Aorta (tissue), 5 donors: ENCODE measurements at regions of chr3 and their contacts with region 1.

Region 1: DNA sequence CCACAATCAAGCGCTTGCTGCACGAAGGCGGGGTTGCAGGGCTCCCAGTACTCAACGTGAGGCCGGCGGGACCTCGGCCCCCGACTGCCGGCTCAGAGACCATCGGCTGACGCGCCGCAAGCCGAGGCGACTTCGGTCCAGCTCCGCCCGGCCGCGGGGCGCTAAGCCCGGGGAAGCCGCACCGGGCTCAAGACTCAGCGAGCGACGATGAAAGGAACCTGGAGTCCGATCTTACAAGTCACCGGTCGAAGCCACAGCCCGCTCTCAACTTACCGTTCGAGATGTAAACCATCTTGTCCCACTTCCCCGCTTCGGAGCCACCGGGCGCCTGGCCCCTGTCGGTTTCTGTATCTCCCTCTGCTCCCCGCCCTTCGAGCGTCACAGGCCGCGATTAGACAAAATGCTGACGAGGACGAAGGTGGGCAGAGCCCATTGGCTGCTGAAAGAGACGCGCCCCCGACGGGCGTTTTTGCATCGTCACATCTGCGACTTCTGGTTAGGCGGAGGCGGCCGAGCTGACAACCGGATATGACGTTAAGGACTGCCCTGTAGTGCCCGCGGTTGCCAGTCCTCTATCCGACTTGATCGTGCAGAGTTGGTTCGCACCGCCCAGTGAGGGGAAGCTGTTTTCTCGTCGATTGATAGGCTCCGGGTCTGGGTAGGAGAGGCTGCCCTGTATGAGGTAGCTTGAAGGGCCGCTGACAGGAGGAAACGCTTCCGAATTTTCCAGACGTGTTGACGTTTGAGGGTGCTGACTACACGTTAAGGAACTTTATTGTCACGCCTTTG is at the start of gene SELENOK:
- DNase-seq: peak; percentile 99
- ATAC-seq: peak; percentile 100
- H3K4me3 ChIP-seq: peak within 1 kb of the TSS; percentile 37 to 52
- H3K27ac ChIP-seq: peak within 1 kb of the TSS; percentile 79 to 80
- H3K4me1 ChIP-seq: peaks cover 0 to 9% of the 10 kb centered on the region in 2 donors
- H3K27me3 ChIP-seq: no peaks in the 10 kb centered on the region
- total RNA-seq, gene SELENOK: 44.0 to 62.3 TPM

Region 2: GRCh38 chr3:53347261-53348064 is 544.2 kb before region 1 on chr3 and contains the start of gene DCP1A:
- intact Hi-C with region 1: loop called (anchors 2 to 10 kb)
- DNase-seq: peak; percentile 98
- ATAC-seq: peak; percentile 100
- H3K4me3 ChIP-seq: peak within 1 kb of the TSS; percentile 71 to 81
- H3K27ac ChIP-seq: peak within 1 kb of the TSS; percentile 74 to 91
- H3K4me1 ChIP-seq: no peaks in the 10 kb centered on the region
- H3K27me3 ChIP-seq: no peaks in the 10 kb centered on the region
- total RNA-seq, gene DCP1A: 26.8 to 27.0 TPM

Region 3: GRCh38 chr3:53773611-53774368 is 117.9 kb before region 1 on chr3:
- intact Hi-C with region 1: loop called in 1 of 2 experiments (anchors 5 kb)
- DNase-seq: no peak
- ATAC-seq: peak; percentile 71
- H3K4me3 ChIP-seq: no peak overlapping the region
- H3K27ac ChIP-seq: peak overlapping the region in 1 of 2 donors; percentile 10
- H3K4me1 ChIP-seq: peaks cover 4 to 5% of the 10 kb centered on the region in 2 donors
- H3K27me3 ChIP-seq: no peaks in the 10 kb centered on the region

Region 4: DNA sequence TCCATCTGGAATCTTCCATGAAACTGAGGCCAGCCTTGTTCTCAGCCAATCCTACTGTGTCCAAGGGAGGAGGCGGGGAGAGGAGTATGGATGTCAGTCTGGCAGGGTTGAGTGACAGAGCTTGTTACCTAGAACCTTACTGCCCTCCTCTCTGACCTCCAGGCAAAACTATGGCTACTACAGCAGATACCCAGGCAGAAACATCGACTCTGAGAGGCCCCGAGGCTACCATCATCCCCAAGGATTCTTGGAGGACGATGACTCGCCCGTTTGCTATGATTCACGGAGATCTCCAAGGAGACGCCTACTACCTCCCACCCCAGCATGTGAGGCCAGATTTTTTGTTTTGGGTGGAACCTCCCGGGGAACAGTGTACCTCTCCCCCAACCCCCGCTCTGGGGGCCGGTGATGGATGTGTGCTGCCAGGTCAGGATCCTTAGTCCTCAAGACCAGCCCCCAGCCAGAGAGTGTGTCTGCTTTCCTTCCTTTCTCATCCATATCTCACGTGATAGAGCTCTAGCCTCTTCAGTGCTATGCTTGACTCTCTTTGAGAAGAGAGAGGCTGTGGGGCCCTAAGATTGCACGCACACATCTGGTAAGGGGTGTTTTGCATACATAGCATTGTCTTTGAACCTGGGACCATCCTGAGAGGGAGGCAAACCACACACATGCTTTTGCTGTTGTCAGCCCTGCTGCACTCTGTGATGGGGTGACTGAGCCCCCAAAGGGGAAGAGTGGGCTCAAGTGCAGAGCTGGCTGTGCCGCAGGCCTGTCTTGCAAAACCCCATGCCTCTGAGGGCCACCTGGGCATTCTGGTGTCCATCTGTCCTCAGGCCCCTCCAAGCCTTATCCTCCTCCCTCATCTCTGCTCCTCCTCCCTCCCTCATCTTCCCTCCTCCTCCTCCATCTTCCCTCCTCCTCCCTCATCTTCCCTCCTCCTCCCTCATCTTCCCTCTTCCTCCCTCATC is 86.6 kb before region 1 on chr3:
- intact Hi-C with region 1: loop called in 1 of 2 experiments (anchors 5 kb)
- DNase-seq: peak in 1 of 2 donors; percentile 77
- ATAC-seq: no peak
- H3K4me3 ChIP-seq: no peak overlapping the region
- H3K27ac ChIP-seq: no peak overlapping the region
- H3K4me1 ChIP-seq: no peaks in the 10 kb centered on the region
- H3K27me3 ChIP-seq: no peaks in the 10 kb centered on the region

Region 5: GRCh38 chr3:53816425-53816824 is 75.3 kb before region 1 on chr3:
- intact Hi-C with region 1: no loop called
- DNase-seq: no peak
- ATAC-seq: no peak
- H3K4me3 ChIP-seq: no peak overlapping the region
- H3K27ac ChIP-seq: no peak overlapping the region
- H3K4me1 ChIP-seq: no peaks in the 10 kb centered on the region
- H3K27me3 ChIP-seq: no peaks in the 10 kb centered on the region